Vagina (tissue), 2 donors: ENCODE measurements at regions of chr11 and their contacts with region 1.

Region 1: GRCh38 chr11:74739546-74740270 is 8.5 kb upstream of the CHRDL2 start:
- DNase-seq: no peak
- H3K4me3 ChIP-seq: no peak overlapping the region
- H3K27ac ChIP-seq: no peak overlapping the region
- H3K4me1 ChIP-seq: no peaks in the 10 kb centered on the region
- H3K27me3 ChIP-seq: no peaks in the 10 kb centered on the region
- CTCF ChIP-seq: peak; percentile 25 to 76 (median 67)
- POLR2A ChIP-seq: no peak

Region 2: DNA sequence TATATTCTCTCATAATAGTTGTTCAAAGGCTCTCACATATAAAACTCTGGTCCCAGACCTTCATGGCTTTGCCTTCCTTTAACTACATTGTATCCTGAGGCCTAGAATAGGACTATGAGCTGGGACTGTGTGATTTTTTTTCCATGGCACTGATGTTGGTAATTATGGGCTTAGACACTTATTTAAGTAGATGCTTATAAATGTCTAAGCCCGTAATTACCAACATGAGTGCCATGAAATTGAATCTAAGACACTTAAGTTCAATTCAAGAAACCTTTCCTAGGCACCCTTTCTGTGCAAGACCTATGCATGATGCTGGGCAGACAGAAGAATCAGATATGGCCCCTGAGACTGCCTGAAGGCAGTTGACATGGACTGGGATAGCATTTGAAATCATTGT is 491.2 kb before region 1 on chr11:
- intact Hi-C with region 1: loop called (anchors 10 kb)
- DNase-seq: no peak
- H3K4me3 ChIP-seq: no peak overlapping the region
- H3K27ac ChIP-seq: no peak overlapping the region
- H3K4me1 ChIP-seq: no peaks in the 10 kb centered on the region
- H3K27me3 ChIP-seq: no peaks in the 10 kb centered on the region
- CTCF ChIP-seq: no peak
- POLR2A ChIP-seq: no peak